ENCODE measurements at regions of chr9 and their contacts with region 1.

Region 1: DNA sequence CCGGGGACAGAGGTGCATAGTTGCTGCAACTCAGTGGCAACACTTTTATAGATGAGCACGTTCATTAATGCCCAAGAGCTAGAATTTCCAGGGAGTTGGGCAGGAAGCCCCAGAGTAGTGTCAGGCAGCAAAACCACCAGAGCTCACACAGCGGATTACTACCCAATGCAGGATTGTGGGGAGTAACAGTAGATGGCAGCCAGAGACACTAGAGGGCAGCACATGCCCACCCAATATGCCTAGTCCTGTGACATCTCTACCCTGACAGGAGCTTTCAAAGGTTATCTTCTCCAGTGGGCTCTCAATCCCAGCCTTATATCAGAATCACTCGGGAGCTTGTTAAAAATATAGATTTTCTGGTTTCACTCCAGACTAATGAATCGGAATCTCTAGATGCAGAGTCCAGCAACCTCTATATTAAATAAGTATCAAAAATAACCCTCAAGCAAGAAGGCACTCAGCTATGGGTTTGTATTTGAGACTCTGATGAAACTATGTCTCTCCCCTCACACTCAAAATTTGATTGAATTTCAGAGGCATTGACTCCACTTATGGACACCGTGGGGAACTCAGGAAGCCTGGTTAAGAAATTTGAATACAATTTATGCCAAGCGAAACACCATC is 58.4 kb upstream of the PHF24 start:
- DNase-seq: peak; percentile 85
- ATAC-seq: peak; percentile 99
- H3K4me3 Mint-ChIP-seq: no peak overlapping the region
- H3K27ac Mint-ChIP-seq: no peak overlapping the region
- H3K4me1 Mint-ChIP-seq: no peaks in the 10 kb centered on the region
- H3K27me3 Mint-ChIP-seq: peaks cover 63% of the 10 kb centered on the region

Region 2: GRCh38 chr9:34929506-34930102 is 30.0 kb after region 1 on chr9:
- CTCF ChIA-PET with region 1: interaction called, 11 read pairs
- DNase-seq: no peak
- ATAC-seq: peak; percentile 57
- H3K4me3 Mint-ChIP-seq: no peak overlapping the region
- H3K27ac Mint-ChIP-seq: no peak overlapping the region
- H3K4me1 Mint-ChIP-seq: no peaks in the 10 kb centered on the region
- H3K27me3 Mint-ChIP-seq: peaks cover 25% of the 10 kb centered on the region

Region 3: DNA sequence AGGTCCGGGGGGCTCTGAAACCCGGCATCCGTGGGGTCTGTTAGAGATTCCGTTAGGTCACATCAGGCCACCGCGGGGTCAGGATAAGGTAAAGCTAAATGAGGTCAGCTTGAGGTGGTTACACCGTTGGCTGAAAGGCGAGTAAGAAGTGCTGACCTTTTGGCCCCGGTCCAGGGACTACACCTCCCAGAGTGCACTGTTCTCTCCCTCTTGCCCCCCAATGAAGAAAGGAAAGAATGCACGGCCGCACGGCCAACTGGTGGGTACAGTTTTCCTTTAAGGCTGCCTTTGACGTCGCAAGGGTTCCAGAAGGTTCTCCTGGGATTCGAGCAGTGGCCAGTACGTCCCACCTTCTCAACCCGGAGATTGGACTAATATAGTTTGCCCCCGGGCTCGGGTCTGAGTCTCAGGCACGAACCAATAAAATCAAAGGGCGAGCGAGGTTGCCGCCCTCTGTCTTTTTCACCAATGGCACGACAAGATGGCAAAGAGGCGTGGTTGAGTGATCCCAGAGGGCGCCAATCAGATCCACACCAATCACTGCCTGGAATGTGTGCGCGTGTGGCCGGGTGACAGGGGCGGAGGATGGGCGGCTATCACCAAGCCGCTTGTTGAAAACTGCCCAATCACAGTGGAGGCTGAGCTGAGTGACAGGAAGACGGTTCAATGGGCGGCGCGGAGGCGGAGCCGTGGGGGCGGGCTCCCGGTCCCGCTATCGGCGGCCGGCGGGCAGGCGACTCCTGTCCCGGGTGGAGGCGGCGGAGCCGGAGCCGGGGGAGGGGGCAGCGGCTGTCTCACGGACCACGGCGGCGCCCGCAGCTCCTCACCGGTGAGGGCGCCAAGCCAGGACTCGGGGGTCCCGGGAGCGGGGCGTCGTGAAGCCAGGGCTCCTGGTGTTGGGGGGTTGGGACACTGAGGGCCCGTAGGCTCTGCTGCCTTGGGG is 89.6 kb after region 1 on chr9 and contains the start of gene DNAJB5:
- CTCF ChIA-PET with region 1: interaction called, 45 read pairs
- DNase-seq: peak; percentile 98
- ATAC-seq: peak; percentile 97
- H3K4me3 Mint-ChIP-seq: peak within 1 kb of the TSS; percentile 90
- H3K27ac Mint-ChIP-seq: peak within 1 kb of the TSS; percentile 94
- H3K4me1 Mint-ChIP-seq: peaks cover 44% of the 10 kb centered on the region
- H3K27me3 Mint-ChIP-seq: no peaks in the 10 kb centered on the region
- total RNA-seq, gene DNAJB5: 5.2 to 5.5 TPM

Region 4: GRCh38 chr9:34994260-34994899 is 94.7 kb after region 1 on chr9:
- CTCF ChIA-PET with region 1: interaction called, 22 read pairs
- DNase-seq: no peak
- ATAC-seq: no peak
- H3K4me3 Mint-ChIP-seq: no peak overlapping the region
- H3K27ac Mint-ChIP-seq: no peak overlapping the region
- H3K4me1 Mint-ChIP-seq: peaks cover 15% of the 10 kb centered on the region
- H3K27me3 Mint-ChIP-seq: no peaks in the 10 kb centered on the region

Region 5: GRCh38 chr9:35051069-35051967 is 151.7 kb after region 1 on chr9:
- CTCF ChIA-PET with region 1: interaction called, 48 read pairs
- DNase-seq: peak; percentile 69
- ATAC-seq: peak; percentile 84
- H3K4me3 Mint-ChIP-seq: no peak overlapping the region
- H3K27ac Mint-ChIP-seq: peak overlapping the region; percentile 26
- H3K4me1 Mint-ChIP-seq: no peaks in the 10 kb centered on the region
- H3K27me3 Mint-ChIP-seq: no peaks in the 10 kb centered on the region

Region 6: GRCh38 chr9:35096035-35096849 is 196.6 kb after region 1 on chr9 and contains the start of gene PIGO:
- CTCF ChIA-PET with region 1: interaction called, 16 read pairs
- DNase-seq: peak; percentile 92
- ATAC-seq: peak; percentile 95
- H3K4me3 Mint-ChIP-seq: peak within 1 kb of the TSS; percentile 84
- H3K27ac Mint-ChIP-seq: peak within 1 kb of the TSS; percentile 90
- H3K4me1 Mint-ChIP-seq: peaks cover 42% of the 10 kb centered on the region
- H3K27me3 Mint-ChIP-seq: no peaks in the 10 kb centered on the region
- total RNA-seq, gene PIGO: 28.5 to 31.6 TPM

Region 7: GRCh38 chr9:35476596-35476995 is 576.9 kb after region 1 on chr9:
- CTCF ChIA-PET with region 1: interaction called, 13 read pairs
- DNase-seq: no peak
- ATAC-seq: no peak
- H3K4me3 Mint-ChIP-seq: no peak overlapping the region
- H3K27ac Mint-ChIP-seq: no peak overlapping the region
- H3K4me1 Mint-ChIP-seq: no peaks in the 10 kb centered on the region
- H3K27me3 Mint-ChIP-seq: peaks cover 25% of the 10 kb centered on the region